ENCODE measurements at regions of chr7 and their contacts with region 1.

Region 1: GRCh38 chr7:133331861-133332260 is 79.0 kb downstream of the EXOC4 start:
- DNase-seq: no peak
- ATAC-seq: no peak
- H3K4me3 ChIP-seq: no peak overlapping the region
- H3K27ac ChIP-seq: no peak overlapping the region
- H3K4me1 ChIP-seq: no peaks in the 10 kb centered on the region
- H3K27me3 ChIP-seq: no peaks in the 10 kb centered on the region
- CTCF ChIP-seq: no peak

Region 2: GRCh38 chr7:133310232-133310862 is 21.5 kb before region 1 on chr7:
- intact Hi-C with region 1: loop called in 1 of 10 experiments (anchors 2 kb)
- DNase-seq: peak in 1 of 2 donors; percentile 46
- ATAC-seq: peak in 6 of 8 donors; percentile 51 to 83 (median 59)
- H3K4me3 ChIP-seq: no peak overlapping the region
- H3K27ac ChIP-seq: peak overlapping the region in 1 of 10 donors; percentile 0
- H3K4me1 ChIP-seq: peaks cover 0 to 15% (median 0%) of the 10 kb centered on the region in 9 donors
- H3K27me3 ChIP-seq: no peaks in the 10 kb centered on the region
- CTCF ChIP-seq: no peak